ENCODE measurements at regions of chr4 and their contacts with region 1.

Region 1: GRCh38 chr4:16225863-16226815 is at the start of gene TAPT1:
- DNase-seq: peak; percentile 88
- ATAC-seq: peak; percentile 80
- H3K4me3 ChIP-seq: peak within 1 kb of the TSS; percentile 77 to 95 (median 87)
- H3K4me3 Mint-ChIP-seq: peak within 1 kb of the TSS; percentile 99
- H3K27ac ChIP-seq: peak within 1 kb of the TSS; percentile 69 to 92
- H3K27ac Mint-ChIP-seq: peak within 1 kb of the TSS; percentile 99
- H3K4me1 ChIP-seq: peaks cover 33 to 54% of the 10 kb centered on the region in 2 donors
- H3K4me1 Mint-ChIP-seq: peaks cover 66% of the 10 kb centered on the region
- H3K27me3 ChIP-seq: no peaks in the 10 kb centered on the region
- H3K27me3 Mint-ChIP-seq: no peaks in the 10 kb centered on the region
- CTCF ChIP-seq: no peak
- total RNA-seq, gene TAPT1: 76.0 and 88.5 TPM in 2 replicates

Region 2: DNA sequence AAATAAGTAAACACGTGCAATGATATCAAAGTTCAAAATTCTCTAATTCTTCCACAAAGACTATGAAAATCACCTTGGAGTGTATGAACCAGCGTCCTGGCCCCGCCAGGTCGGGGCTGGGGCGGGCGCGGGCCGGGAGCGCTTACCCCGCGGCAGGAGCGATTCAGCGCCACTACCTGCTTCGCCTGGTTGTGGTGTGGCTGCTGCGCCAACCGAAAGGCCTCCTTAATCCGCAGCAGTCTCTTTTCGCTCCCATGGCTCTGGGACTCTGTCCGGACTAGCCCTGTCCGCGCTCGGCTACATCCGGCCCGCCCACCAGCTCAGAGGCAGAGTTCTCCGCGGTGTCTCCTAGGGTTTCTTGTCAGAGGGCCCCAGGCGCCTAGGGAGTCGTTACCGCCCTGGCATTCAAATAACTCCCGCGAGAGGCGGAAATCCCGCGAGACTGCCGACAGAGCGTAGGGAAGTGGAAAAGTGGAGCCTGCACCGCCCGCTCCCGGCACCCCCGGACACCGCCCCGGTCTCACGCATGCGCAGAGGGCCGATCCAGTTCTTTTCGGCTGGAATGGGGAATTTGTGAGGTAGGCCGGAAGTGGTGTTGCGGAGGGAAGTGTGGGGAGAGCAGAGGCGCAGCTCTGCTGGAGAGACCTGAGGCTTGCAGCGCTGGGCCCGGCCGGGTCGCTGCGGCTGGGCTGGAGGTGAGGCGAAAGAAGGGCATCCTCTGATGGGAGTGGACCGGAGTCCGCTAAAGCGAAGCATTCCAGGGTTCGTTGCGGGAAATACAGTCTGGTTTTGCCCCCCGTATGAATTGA is 544.7 kb before region 1 on chr4 and contains the start of gene FAM200B:
- CTCF ChIA-PET with region 1: no interaction called
- POLR2A ChIA-PET with region 1: no interaction called
- intact Hi-C with region 1: loop called (anchors 5 kb)
- DNase-seq: peak; percentile 96
- ATAC-seq: peak; percentile 98
- H3K4me3 ChIP-seq: peak within 1 kb of the TSS; percentile 83 to 99 (median 89)
- H3K4me3 Mint-ChIP-seq: peak within 1 kb of the TSS; percentile 95
- H3K27ac ChIP-seq: peak within 1 kb of the TSS; percentile 68 to 80
- H3K27ac Mint-ChIP-seq: peak within 1 kb of the TSS; percentile 89
- H3K4me1 ChIP-seq: peaks cover 8 to 16% of the 10 kb centered on the region in 2 donors
- H3K4me1 Mint-ChIP-seq: peaks cover 22% of the 10 kb centered on the region
- H3K27me3 ChIP-seq: no peaks in the 10 kb centered on the region
- H3K27me3 Mint-ChIP-seq: no peaks in the 10 kb centered on the region
- CTCF ChIP-seq: no peak
- total RNA-seq, gene FAM200B: 11.0 and 12.1 TPM in 2 replicates

Region 3: DNA sequence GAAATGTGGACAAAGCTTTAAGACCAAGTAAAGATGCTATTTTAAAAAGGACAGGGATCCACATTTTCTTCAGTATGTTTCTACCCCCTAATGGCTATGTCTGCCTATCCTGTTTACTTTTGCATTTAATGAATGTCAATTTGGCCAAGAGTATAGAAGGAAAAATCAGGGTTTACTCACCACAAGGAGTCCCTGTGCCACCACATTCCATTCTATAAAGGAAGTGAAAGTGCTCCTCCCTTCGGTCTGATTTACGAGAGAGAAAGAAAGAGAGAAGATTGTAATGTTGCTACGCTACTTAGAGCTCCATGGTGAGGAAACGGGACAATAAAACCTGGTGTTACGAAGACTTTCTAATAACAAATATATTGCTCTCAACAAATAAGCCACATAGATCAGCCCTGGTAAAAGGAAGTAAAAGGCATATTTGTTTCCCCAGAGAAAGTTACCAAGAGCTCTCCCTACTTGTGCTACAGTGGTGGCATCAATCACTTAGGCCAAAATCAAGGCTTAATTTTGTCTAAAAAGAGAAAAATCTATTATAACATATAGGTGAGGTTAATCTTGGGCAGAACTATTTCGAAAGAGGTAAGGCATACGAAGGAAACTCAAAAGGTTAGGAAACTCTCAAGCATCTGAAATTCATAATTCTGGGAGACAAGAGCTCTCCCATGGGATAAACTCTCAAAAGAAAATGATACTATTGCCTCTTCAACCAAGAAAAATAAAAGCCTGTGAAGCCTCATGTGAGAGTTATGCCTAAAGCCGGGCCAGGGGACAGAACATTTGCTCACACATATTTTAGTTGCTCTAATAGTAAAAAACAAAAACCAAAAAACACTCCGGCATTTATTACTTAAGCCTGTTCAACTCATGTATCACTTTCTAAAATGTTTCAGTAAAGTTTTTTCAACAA is 29.4 kb before region 1 on chr4:
- CTCF ChIA-PET with region 1: interaction called, 9 read pairs
- POLR2A ChIA-PET with region 1: no interaction called
- intact Hi-C with region 1: loop called (anchors 2 kb)
- DNase-seq: peak; percentile 73
- ATAC-seq: peak; percentile 83
- H3K4me3 ChIP-seq: peak overlapping the region in 2 of 5 experiments; percentile 16 to 34
- H3K4me3 Mint-ChIP-seq: peak overlapping the region; percentile 40
- H3K27ac ChIP-seq: peak overlapping the region; percentile 40 to 62
- H3K27ac Mint-ChIP-seq: peak overlapping the region; percentile 32
- H3K4me1 ChIP-seq: peaks cover 12 to 19% of the 10 kb centered on the region in 2 donors
- H3K4me1 Mint-ChIP-seq: peaks cover 30% of the 10 kb centered on the region
- H3K27me3 ChIP-seq: no peaks in the 10 kb centered on the region
- H3K27me3 Mint-ChIP-seq: no peaks in the 10 kb centered on the region
- CTCF ChIP-seq: no peak

Region 4: DNA sequence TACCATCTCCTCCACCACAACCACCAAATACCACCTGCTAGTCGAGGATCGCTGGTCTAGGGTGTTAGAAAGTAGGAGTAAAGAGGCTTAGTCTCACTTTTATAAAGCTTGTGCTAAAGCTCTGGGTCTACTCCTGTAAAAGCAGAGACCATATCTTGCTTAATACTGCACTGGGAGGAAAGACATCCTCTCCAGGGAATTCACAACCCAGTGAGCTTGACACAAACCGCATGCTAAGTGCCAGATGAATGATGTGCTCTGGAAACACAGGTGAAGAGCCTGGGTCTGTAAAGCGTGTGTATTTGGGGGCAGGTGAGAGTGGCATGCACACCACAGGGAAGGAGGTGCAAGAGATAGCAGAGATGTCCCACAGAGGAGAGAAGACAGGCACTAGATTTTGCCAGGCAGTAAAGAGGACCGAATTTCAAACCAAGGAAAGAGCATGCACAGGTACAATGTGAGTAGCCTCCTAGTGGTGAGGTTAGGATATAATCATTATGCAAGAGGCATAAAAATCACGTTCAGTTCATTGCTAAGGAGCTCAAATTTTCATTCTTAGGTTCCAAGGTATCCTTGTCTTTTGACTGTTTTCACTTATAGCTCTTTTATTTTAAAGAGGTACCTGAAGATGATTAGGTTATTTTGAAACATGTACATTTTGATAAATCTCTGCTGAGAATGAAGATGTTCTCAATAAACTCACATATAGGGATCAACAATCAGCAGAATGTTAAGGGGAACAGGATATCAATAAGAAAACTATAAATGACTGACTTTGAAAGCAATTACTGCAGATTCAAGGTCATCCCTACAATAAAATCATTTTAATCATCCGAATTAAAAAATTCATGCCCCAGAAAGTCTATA is 20.6 kb before region 1 on chr4:
- CTCF ChIA-PET with region 1: interaction called, 15 read pairs
- POLR2A ChIA-PET with region 1: interaction called, 5 read pairs
- intact Hi-C with region 1: loop called (anchors 2 kb)
- DNase-seq: peak; percentile 78
- ATAC-seq: peak; percentile 72
- H3K4me3 ChIP-seq: no peak overlapping the region
- H3K4me3 Mint-ChIP-seq: peak overlapping the region; percentile 54
- H3K27ac ChIP-seq: no peak overlapping the region
- H3K27ac Mint-ChIP-seq: peak overlapping the region; percentile 76
- H3K4me1 ChIP-seq: peaks cover 19 to 25% of the 10 kb centered on the region in 2 donors
- H3K4me1 Mint-ChIP-seq: peaks cover 42% of the 10 kb centered on the region
- H3K27me3 ChIP-seq: no peaks in the 10 kb centered on the region
- H3K27me3 Mint-ChIP-seq: no peaks in the 10 kb centered on the region
- CTCF ChIP-seq: peak; percentile 86

Region 5: DNA sequence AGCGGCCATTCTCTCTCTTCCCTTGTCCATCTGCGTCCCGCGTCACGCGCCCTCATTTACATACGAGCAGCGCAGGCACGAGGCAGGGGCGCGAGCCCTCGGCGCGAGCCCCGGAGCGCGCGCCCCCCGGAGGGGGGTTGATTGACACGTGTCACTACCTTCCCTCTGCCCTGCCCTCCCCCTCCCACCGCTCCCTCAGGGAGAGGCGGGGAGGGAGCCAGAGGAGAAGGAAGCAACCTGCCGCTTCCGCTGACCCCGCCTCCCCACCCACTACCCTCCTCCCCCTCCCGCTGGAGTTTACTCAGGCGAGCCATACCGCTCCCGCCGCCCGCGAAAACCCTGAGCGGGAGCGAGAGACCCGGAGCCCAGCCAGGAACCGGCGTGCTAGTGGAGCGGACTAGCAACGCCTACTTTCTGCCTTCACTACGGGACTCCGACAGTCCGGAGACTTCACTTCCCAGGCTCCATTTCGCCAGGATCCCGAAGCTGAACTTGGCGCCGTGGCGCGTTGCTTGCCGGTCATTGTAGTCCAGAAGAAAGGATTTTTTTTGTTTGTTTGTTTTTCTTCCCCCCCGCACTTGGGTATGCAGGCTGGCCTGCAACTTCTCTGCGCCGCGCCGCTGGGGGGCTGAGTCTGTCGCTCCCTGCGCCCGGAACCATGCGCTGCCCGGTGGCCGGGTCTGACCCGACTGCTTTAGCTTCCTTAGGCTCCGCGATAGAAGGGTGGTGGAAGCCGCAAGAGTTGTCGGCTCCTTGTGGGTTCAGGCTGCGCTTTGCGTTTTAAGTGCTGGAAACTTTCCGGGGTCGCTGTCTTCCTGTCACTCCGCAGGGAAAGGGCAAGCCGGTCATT is 1795.8 kb after region 1 on chr4 and contains the start of gene LCORL:
- CTCF ChIA-PET with region 1: no interaction called
- POLR2A ChIA-PET with region 1: no interaction called
- intact Hi-C with region 1: loop called (anchors 5 kb)
- DNase-seq: peak; percentile 95
- ATAC-seq: peak; percentile 77
- H3K4me3 ChIP-seq: peak within 1 kb of the TSS; percentile 71 to 98 (median 85)
- H3K4me3 Mint-ChIP-seq: peak within 1 kb of the TSS; percentile 96
- H3K27ac ChIP-seq: peak within 1 kb of the TSS; percentile 86 to 88
- H3K27ac Mint-ChIP-seq: peak within 1 kb of the TSS; percentile 98
- H3K4me1 ChIP-seq: peaks cover 14 to 18% of the 10 kb centered on the region in 2 donors
- H3K4me1 Mint-ChIP-seq: peaks cover 22% of the 10 kb centered on the region
- H3K27me3 ChIP-seq: peaks cover 0 to 5% (median 0%) of the 10 kb centered on the region in 4 experiments
- H3K27me3 Mint-ChIP-seq: peaks cover 3% of the 10 kb centered on the region
- CTCF ChIP-seq: peak; percentile 15
- total RNA-seq, gene LCORL: 30.4 and 31.3 TPM in 2 replicates